Left ventricle myocardium superior (tissue), 1 donor: ENCODE measurements at regions of chr11 and their contacts with region 1.

Region 1: DNA sequence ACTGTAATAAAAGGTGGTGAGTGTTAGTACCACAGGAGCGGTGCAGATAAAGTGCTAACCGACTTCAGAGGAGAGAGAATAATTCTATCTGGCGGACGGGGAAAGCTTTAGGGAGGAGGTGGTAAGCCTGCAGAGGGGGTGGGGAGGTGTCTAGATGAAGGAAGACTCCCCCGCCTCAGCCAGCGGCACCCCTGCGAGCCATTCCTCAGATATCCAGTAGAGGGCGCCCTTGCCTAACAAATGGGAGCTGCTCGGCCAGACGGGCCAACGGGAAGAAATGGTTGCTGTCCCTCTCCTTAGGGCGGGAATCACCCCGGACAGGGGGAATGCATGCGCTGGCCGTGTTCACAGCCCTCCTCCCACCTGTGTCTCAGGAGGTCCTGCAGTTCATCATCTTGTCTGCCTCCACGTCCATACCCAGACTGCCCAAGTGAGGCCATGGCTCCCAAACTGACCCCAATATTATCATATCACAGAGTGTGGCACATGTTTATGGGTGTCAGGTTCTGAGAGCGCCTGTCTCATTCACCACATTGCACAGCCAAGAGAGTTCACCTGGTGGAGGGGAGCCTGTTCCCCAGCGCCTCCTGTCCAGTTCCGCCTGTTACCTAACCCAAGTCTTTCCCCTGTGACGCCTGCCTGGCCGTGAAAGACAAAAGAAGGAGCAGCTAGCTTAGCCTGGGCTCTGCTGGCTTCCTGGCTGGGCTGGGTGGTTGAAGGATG is 85.5 kb downstream of the ST3GAL4 start:
- DNase-seq: peak; percentile 80
- ATAC-seq: peak; percentile 57

Region 2: GRCh38 chr11:126480410-126481302 is 39.7 kb after region 1 on chr11:
- intact Hi-C with region 1: loop called (anchors 2 kb)
- DNase-seq: peak; percentile 81
- ATAC-seq: peak; percentile 93

Region 3: DNA sequence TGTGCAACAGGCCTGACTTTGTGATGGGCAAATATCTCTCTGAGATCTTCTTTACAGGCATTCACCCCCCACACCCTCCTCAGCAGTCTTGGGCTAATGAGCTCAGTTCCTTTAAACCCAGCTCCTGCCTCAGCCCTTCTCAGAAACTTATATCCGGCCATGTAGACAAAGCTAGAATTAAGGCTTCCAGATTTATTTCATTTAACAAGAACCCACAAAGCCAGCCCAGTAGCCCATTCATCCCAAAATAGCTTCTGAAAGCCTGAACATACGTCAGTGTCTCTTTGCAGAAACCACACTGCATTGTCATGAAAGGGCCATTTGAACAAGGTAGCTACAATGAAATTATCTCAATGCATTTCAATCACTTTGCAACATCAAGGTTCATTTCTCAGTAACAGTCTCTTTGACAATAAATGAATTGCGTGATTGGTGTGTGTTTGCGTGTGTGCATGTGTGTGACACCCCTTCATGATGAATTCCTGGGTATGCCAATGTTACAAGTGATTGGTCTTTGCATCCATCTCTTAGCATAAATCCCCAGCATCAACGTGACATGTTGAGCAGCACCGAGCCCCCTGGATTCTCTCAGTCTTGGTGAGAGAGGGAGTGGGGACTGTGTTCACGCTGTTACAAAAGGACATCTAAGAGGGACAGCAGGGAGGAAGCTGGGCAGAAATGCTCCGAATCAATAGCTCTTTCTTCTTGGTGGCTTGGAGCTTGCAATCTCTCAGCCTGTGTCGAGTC is 260.0 kb after region 1 on chr11:
- intact Hi-C with region 1: no loop called
- DNase-seq: no peak
- ATAC-seq: no peak

Region 4: DNA sequence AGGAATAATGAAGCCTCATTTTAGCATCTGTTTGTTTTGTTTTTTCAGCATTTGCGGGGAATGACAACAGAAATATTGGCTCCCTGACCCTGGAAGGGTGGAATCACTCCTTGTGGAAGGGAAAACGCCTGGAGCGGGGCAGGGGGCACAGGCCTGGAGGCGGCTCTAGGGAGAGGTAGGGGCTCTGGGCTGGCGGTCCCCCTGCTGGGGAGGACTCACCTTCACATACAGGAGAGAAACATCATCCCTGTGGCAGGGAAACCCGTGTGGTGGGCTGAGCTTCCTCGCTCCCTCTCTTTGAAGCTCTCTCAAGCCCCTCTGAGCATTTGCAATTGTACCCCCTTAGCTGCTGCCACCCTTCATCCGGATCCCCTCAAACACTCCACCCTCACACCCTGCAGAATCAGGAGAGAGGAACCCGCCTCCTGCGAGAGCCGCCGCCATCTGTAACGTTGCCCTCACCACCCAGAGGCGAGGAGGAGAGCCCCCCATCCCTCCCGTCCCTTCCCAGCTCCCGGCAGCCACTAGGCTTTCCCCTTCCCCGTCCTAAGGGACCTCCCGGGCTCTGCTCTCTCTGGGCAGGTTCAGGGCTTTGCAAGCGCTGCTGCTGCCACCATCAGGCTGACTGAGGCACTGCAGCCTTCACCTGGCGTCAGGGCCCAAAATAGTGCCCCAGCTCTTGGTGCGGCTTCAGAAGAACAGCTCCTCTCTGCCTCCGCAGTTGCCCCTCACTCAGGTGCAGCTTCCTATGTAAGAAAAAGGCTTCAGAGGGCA is 549.2 kb after region 1 on chr11:
- intact Hi-C with region 1: loop called (anchors 10 kb)
- DNase-seq: peak; percentile 77
- ATAC-seq: peak; percentile 84

Region 5: DNA sequence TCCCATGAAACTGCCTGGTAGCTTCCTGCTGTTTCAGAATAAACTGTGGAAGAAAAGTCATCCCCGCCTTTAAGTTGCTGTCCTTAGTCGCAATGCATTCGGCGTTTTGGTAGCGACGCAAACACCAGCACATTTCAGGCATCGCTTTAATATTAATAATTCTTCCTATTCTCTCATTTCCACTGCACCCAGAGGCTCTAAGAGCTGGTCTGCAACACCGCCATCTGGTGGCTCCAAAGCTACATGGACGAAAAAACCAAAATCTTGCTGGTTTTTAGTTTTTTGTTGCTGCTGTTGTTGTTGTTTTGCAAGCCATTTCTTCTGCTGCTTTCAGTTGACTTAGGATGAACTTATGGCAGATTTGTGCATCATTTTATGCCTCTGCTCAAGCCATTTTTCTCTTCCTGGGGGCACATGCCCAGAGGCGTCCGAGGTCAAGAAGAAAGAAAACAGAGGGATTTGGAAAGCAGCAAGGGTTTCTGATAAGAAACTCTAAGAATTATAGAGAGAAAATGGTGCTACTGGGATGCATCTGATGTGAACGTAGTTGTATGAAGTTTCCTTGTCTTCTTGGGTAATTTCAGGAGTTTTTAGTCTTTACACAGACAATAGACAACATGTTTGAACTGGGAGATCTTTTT is 905.0 kb after region 1 on chr11:
- intact Hi-C with region 1: loop called (anchors 10 kb)
- DNase-seq: peak; percentile 44
- ATAC-seq: no peak